H1 (cell line): ENCODE measurements at regions of chr7 and their contacts with region 1.

Region 1: GRCh38 chr7:134547397-134548054 is 1.4 kb upstream of the AKR1B15 start:
- DNase-seq: peak; percentile 49 to 80
- H3K4me3 ChIP-seq: peak overlapping the region; percentile 22 to 58 (median 48)
- H3K27ac ChIP-seq: peak overlapping the region; percentile 36; the same call in 1 of the 2 replicates
- H3K4me1 ChIP-seq: peaks cover 8 to 14% (median 9%) of the 10 kb centered on the region in 4 experiments
- H3K27me3 ChIP-seq: no peaks in the 10 kb centered on the region; a peak in 1 of 7 replicates
- CTCF ChIP-seq: peak; percentile 45 to 76 (median 49); a peak in 3 of 4 replicates
- EP300 ChIP-seq: no peak
- POLR2A ChIP-seq: no peak
- RAD21 ChIP-seq: peak; percentile 30 to 37; a peak in 2 of 4 replicates

Region 2: DNA sequence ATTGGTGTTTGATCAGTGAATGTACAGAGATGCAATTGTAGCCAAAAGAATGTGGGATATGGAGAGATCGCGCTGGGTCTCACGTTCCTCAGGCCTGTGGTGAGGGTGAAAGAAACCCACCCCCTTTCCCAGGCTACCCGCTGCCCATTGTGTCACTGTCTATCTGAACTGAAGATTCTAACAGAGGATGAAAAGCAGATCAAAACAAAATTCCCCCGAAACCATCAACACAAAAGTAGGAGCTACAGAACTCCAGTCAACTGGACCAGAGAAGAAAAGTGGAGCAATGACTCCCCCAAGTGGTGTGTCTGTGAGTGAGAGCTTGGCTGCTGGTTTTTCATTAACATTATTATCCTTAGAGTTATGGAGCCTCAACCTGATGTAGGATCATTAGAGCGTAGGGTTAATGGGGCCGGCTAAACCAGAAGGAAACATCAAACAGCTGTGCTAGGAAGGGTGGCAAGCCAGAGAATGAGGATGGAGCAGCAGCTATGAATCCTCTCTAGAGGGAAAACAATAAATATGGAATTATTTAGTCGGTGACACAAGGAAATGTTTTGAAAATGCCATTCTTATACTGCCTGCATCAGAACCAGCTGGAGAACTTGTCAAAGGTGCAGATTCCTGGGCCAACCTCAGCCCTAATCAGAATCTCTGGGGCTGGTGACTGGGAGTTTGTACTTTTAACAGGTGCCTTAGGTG is 127.0 kb before region 1 on chr7:
- CTCF ChIA-PET with region 1: no interaction called
- POLR2A ChIA-PET with region 1: no interaction called
- DNase-seq: peak in 1 of 2 experiments; percentile 65
- H3K4me3 ChIP-seq: no peak overlapping the region
- H3K27ac ChIP-seq: no peak overlapping the region
- H3K4me1 ChIP-seq: no peaks in the 10 kb centered on the region
- H3K27me3 ChIP-seq: no peaks in the 10 kb centered on the region
- CTCF ChIP-seq: peak in 2 of 3 experiments; percentile 73 to 80; a peak in 3 of 4 replicates
- EP300 ChIP-seq: no peak
- POLR2A ChIP-seq: no peak
- RAD21 ChIP-seq: peak; percentile 87 to 96

Region 3: GRCh38 chr7:134480736-134481135 is 66.8 kb before region 1 on chr7:
- CTCF ChIA-PET with region 1: interaction called, 11 read pairs
- POLR2A ChIA-PET with region 1: no interaction called
- DNase-seq: no peak
- H3K4me3 ChIP-seq: no peak overlapping the region
- H3K27ac ChIP-seq: no peak overlapping the region
- H3K4me1 ChIP-seq: no peaks in the 10 kb centered on the region
- H3K27me3 ChIP-seq: no peaks in the 10 kb centered on the region
- CTCF ChIP-seq: no peak
- EP300 ChIP-seq: no peak
- POLR2A ChIP-seq: no peak
- RAD21 ChIP-seq: no peak

Region 4: GRCh38 chr7:134509010-134509409 is 38.5 kb before region 1 on chr7:
- CTCF ChIA-PET with region 1: interaction called, 33 read pairs
- POLR2A ChIA-PET with region 1: no interaction called
- DNase-seq: no peak
- H3K4me3 ChIP-seq: no peak overlapping the region
- H3K27ac ChIP-seq: no peak overlapping the region
- H3K4me1 ChIP-seq: no peaks in the 10 kb centered on the region
- H3K27me3 ChIP-seq: no peaks in the 10 kb centered on the region
- CTCF ChIP-seq: no peak
- EP300 ChIP-seq: no peak
- POLR2A ChIP-seq: no peak
- RAD21 ChIP-seq: no peak

Region 5: GRCh38 chr7:134527979-134528371 is 19.6 kb before region 1 on chr7:
- CTCF ChIA-PET with region 1: interaction called, 12 read pairs
- POLR2A ChIA-PET with region 1: no interaction called
- DNase-seq: no peak
- H3K4me3 ChIP-seq: no peak overlapping the region
- H3K27ac ChIP-seq: no peak overlapping the region
- H3K4me1 ChIP-seq: peaks cover 0 to 5% (median 1%) of the 10 kb centered on the region in 4 experiments; a peak in 2 of 7 replicates
- H3K27me3 ChIP-seq: no peaks in the 10 kb centered on the region; a peak in 1 of 7 replicates
- CTCF ChIP-seq: no peak
- EP300 ChIP-seq: no peak
- POLR2A ChIP-seq: no peak
- RAD21 ChIP-seq: no peak

Region 6: GRCh38 chr7:134605973-134606923 is 58.7 kb after region 1 on chr7:
- CTCF ChIA-PET with region 1: interaction called, 12 read pairs
- POLR2A ChIA-PET with region 1: interaction called, 3 read pairs
- DNase-seq: peak in 1 of 2 experiments; percentile 68
- H3K4me3 ChIP-seq: no peak overlapping the region
- H3K27ac ChIP-seq: no peak overlapping the region
- H3K4me1 ChIP-seq: no peaks in the 10 kb centered on the region
- H3K27me3 ChIP-seq: peaks cover 0 to 3% (median under 1%) of the 10 kb centered on the region in 4 experiments; a peak in 3 of 7 replicates
- CTCF ChIP-seq: peak; percentile 69 to 79 (median 70)
- EP300 ChIP-seq: no peak
- POLR2A ChIP-seq: no peak
- RAD21 ChIP-seq: peak; percentile 84 to 87